ENCODE measurements at regions of chr12 and their contacts with region 1.

Region 1: DNA sequence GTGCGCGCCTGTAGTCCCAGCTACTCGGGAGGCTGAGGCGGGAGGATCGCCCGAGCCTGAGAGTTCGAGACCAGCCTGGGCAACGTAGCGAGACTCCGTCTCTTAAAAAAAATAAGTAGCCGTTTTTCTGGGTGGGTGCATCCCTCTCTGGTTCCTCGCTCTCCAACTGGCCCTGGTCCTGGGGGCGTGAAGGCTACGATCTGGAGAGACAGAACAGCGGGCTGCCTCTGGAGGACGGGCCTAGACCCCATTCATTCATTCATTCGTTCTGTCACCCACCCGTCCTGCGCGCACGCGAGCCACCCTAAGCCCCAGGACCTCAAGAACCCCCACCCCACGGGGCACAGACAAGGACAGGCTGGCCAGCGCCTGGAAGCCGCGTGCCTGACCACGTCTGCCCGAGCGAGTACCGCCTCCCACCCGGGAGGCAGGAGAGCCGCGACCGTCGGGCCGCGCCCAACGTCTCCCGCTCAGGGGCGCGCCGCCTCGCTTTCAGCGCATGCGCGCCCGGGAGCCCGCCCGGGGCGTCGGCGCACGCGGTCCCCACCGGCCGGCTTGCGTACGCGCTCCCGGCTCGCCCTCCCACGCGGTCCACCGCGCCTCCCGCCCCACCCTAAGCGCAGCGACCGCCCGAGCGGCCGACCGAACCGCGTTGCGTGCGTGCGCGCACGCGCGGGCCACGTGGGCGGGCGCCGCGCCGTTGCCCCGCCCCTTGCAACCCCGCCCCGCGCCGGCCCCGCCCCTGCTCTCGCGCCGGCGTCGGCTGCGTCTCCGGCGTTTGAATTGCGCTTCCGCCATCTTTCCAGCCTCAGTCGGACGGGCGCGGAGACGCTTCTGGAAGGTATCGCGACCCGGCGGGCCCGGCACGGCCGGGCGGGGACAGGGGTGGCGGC is at the start of gene RAN:
- DNase-seq: peak; percentile 94 to 99 (median 96)
- ATAC-seq: peak; percentile 79
- H3K4me3 ChIP-seq: peak within 1 kb of the TSS; percentile 81
- H3K27ac ChIP-seq: peak within 1 kb of the TSS; percentile 99
- H3K4me1 ChIP-seq: peaks cover 27 to 35% of the 10 kb centered on the region in 2 experiments; a peak in 4 of 5 replicates
- H3K27me3 ChIP-seq: no peaks in the 10 kb centered on the region
- CTCF ChIP-seq: no peak
- EP300 ChIP-seq: peak; percentile 32; the same call in 1 of the 2 replicates
- POLR2A ChIP-seq: peak; percentile 87
- RAD21 ChIP-seq: no peak
- polyA plus RNA-seq, gene RAN: 3,304 to 3,469 TPM

Region 2: DNA sequence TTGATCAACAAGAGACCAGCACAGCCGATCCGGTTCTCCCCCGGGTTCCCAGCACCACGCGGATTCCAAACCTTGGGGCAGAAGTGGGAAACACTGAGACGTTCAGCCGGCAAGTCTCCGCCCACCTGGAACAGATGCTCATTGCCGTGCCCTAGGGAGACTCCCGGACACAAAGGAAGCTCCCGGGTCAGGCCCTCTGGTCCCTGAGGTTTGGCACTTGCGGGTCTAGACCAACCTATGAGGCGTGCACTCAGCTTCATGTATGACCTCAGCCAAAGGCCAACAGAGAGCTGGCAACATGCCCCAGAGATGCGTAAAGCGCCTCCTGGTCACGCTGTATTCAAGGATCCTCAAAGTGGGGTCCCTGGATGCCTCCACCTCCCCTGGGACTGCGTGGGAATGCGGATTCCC is 157.9 kb before region 1 on chr12:
- CTCF ChIA-PET with region 1: no interaction called
- POLR2A ChIA-PET with region 1: no interaction called
- in situ Hi-C with region 1: no loop called
- intact Hi-C with region 1: no loop called
- DNase-seq: no peak
- ATAC-seq: no peak
- H3K4me3 ChIP-seq: no peak overlapping the region
- H3K27ac ChIP-seq: no peak overlapping the region
- H3K4me1 ChIP-seq: peaks cover 0 to 4% of the 10 kb centered on the region in 2 experiments; a peak in 2 of 5 replicates
- H3K27me3 ChIP-seq: peaks cover 15 to 82% of the 10 kb centered on the region in 2 experiments
- CTCF ChIP-seq: no peak
- EP300 ChIP-seq: no peak
- POLR2A ChIP-seq: no peak
- RAD21 ChIP-seq: no peak

Region 3: DNA sequence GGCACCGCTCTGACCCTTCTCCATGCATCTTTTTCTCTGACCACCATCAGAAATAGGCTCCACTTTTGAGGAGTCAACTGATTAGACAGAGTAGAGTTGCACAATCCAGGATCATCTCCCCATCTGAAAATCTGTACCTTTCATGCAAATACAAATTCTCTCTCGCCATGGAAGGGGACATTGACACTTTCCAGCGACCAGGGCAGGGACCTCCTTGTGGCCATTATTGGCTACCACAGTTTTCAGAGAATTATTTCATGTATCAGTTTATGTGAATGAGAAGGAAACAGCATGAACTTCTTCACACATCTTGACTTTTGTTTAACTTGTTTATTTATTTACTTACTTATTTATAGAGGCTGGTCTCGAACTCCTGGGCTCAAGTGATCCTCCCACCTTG is 13.4 kb before region 1 on chr12:
- CTCF ChIA-PET with region 1: no interaction called
- POLR2A ChIA-PET with region 1: interaction called, 3 read pairs
- in situ Hi-C with region 1: no loop called
- intact Hi-C with region 1: loop called (anchors 1 kb)
- DNase-seq: no peak
- ATAC-seq: no peak
- H3K4me3 ChIP-seq: no peak overlapping the region
- H3K27ac ChIP-seq: no peak overlapping the region
- H3K4me1 ChIP-seq: peaks cover 16 to 29% of the 10 kb centered on the region in 2 experiments
- H3K27me3 ChIP-seq: no peaks in the 10 kb centered on the region
- CTCF ChIP-seq: no peak
- EP300 ChIP-seq: no peak
- POLR2A ChIP-seq: no peak
- RAD21 ChIP-seq: no peak